ENCODE measurements at regions of chr1 and their contacts with region 1.

Region 1: GRCh38 chr1:154961497-154962262 is at the start of gene PYGO2:
- DNase-seq: peak; percentile 75 to 89
- H3K4me3 ChIP-seq: peak within 1 kb of the TSS; percentile 77 to 78
- H3K27ac ChIP-seq: peak within 1 kb of the TSS; percentile 95 to 98
- H3K4me1 ChIP-seq: peaks cover 0 to 47% (median 30%) of the 10 kb centered on the region in 4 donors
- H3K27me3 ChIP-seq: no peaks in the 10 kb centered on the region
- CTCF ChIP-seq: peak; percentile 49 to 62

Region 2: DNA sequence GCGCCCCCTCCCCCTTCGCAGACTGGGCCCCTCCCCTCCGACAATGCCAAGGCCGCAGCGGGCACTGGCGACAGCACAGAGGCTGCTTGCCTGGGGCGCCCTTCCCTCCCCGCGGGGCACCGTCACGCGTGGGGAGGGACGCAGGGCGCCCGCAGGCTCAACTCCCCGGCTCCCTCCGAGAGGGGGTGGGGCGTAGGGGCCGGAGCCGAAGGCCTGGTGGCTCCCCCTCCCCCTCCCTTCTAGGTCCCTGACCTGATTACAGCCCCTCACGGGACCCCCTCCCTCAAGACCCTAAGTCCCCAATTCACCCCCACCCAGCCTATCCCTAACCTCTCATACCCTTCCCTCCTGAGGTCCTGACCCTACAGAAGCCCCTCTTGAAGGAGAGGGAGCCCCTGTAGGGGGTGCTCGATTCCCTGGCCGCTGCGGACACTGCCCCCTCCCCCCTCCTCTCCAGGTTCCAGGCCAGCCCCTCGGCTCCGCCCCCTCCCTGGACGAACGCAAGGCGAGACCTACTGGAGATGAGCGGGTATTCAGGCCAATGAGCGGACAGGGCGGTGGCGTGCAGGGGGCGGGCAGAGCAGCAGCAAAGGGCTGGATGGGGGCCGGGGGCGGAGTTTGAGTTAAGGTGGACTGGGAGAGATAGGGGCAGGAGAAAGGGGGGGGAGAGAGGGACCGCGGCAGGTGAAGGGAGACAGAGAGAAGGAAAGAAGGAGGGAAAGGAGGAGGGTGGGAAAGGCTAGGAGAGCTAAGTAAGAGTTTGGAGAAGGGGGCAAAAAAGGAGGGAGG is 40.2 kb after region 1 on chr1:
- intact Hi-C with region 1: loop called (anchors 5 kb)
- DNase-seq: peak; percentile 100
- H3K4me3 ChIP-seq: peak overlapping the region; percentile 87 to 96
- H3K27ac ChIP-seq: peak overlapping the region; percentile 95 to 96
- H3K4me1 ChIP-seq: peaks cover 0 to 49% (median 47%) of the 10 kb centered on the region in 4 donors
- H3K27me3 ChIP-seq: no peaks in the 10 kb centered on the region
- CTCF ChIP-seq: peak; percentile 13 to 33

Region 3: GRCh38 chr1:155017041-155017945 is 55.6 kb after region 1 on chr1:
- intact Hi-C with region 1: loop called (anchors 5 kb)
- DNase-seq: peak; percentile 80 to 96
- H3K4me3 ChIP-seq: peak overlapping the region; percentile 47 to 59
- H3K27ac ChIP-seq: peak overlapping the region; percentile 83 to 88
- H3K4me1 ChIP-seq: peaks cover 0 to 31% (median 24%) of the 10 kb centered on the region in 4 donors
- H3K27me3 ChIP-seq: no peaks in the 10 kb centered on the region
- CTCF ChIP-seq: peak; percentile 99

Region 4: GRCh38 chr1:155063550-155064110 is 102.0 kb after region 1 on chr1 and contains the start of gene EFNA4:
- intact Hi-C with region 1: loop called (anchors 5 kb)
- DNase-seq: peak; percentile 75 to 88
- H3K4me3 ChIP-seq: peak within 1 kb of the TSS; percentile 64 to 65
- H3K27ac ChIP-seq: peak within 1 kb of the TSS; percentile 52 to 62
- H3K4me1 ChIP-seq: peaks cover 0 to 37% (median 28%) of the 10 kb centered on the region in 4 donors
- H3K27me3 ChIP-seq: no peaks in the 10 kb centered on the region
- CTCF ChIP-seq: no peak